ENCODE measurements at regions of chr1 and their contacts with region 1.

Region 1: GRCh38 chr1:45686317-45687013 is at the start of gene GPBP1L1:
- DNase-seq: peak; percentile 98
- H3K4me3 Mint-ChIP-seq: peak within 1 kb of the TSS; percentile 89
- H3K27ac Mint-ChIP-seq: peak within 1 kb of the TSS; percentile 80
- H3K4me1 Mint-ChIP-seq: peaks cover 7% of the 10 kb centered on the region
- H3K27me3 Mint-ChIP-seq: no peaks in the 10 kb centered on the region
- CTCF ChIP-seq: no peak
- total RNA-seq, gene GPBP1L1: 117 and 127 TPM in 2 replicates

Region 2: DNA sequence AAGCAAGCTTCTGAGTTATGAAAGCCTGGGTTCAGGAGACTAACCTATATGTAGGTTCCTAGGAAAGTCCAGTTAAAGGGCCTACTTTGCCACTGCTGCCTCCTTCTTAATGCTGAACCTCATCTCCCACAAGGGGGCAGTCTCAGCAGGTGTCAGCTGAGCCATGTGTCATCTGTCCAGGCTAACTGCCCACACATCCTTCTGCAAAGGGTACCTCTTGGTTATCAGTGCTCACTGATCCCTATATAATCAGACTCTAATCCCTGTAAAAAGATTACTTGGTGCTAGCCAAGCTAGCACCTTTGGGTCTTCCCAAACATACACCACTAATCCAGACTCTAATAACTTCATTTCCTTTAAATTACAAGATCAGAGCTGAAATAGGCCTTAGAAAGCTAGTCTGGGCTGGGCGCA is 173.8 kb before region 1 on chr1:
- CTCF ChIA-PET with region 1: no interaction called
- intact Hi-C with region 1: loop called (anchors 5 kb)
- DNase-seq: peak; percentile 79
- H3K4me3 Mint-ChIP-seq: no peak overlapping the region
- H3K27ac Mint-ChIP-seq: no peak overlapping the region
- H3K4me1 Mint-ChIP-seq: peaks cover 46% of the 10 kb centered on the region
- H3K27me3 Mint-ChIP-seq: no peaks in the 10 kb centered on the region
- CTCF ChIP-seq: peak; percentile 72

Region 3: GRCh38 chr1:45621501-45621836 is 65.0 kb before region 1 on chr1:
- CTCF ChIA-PET with region 1: no interaction called
- intact Hi-C with region 1: no loop called
- DNase-seq: no peak
- H3K4me3 Mint-ChIP-seq: no peak overlapping the region
- H3K27ac Mint-ChIP-seq: no peak overlapping the region
- H3K4me1 Mint-ChIP-seq: no peaks in the 10 kb centered on the region
- H3K27me3 Mint-ChIP-seq: no peaks in the 10 kb centered on the region
- CTCF ChIP-seq: no peak

Region 4: GRCh38 chr1:45643978-45644377 is 42.5 kb before region 1 on chr1:
- CTCF ChIA-PET with region 1: interaction called, 7 read pairs
- intact Hi-C with region 1: loop called (anchors 2 kb)
- DNase-seq: peak; percentile 26
- H3K4me3 Mint-ChIP-seq: no peak overlapping the region
- H3K27ac Mint-ChIP-seq: no peak overlapping the region
- H3K4me1 Mint-ChIP-seq: peaks cover 20% of the 10 kb centered on the region
- H3K27me3 Mint-ChIP-seq: no peaks in the 10 kb centered on the region
- CTCF ChIP-seq: no peak

Region 5: GRCh38 chr1:45704637-45705036 is 18.2 kb after region 1 on chr1:
- CTCF ChIA-PET with region 1: no interaction called
- intact Hi-C with region 1: no loop called
- DNase-seq: no peak
- H3K4me3 Mint-ChIP-seq: no peak overlapping the region
- H3K27ac Mint-ChIP-seq: no peak overlapping the region
- H3K4me1 Mint-ChIP-seq: no peaks in the 10 kb centered on the region
- H3K27me3 Mint-ChIP-seq: no peaks in the 10 kb centered on the region
- CTCF ChIP-seq: no peak

Region 6: GRCh38 chr1:45843474-45843905 is 157.0 kb after region 1 on chr1:
- CTCF ChIA-PET with region 1: interaction called, 10 read pairs
- intact Hi-C with region 1: no loop called
- DNase-seq: no peak
- H3K4me3 Mint-ChIP-seq: no peak overlapping the region
- H3K27ac Mint-ChIP-seq: no peak overlapping the region
- H3K4me1 Mint-ChIP-seq: no peaks in the 10 kb centered on the region
- H3K27me3 Mint-ChIP-seq: no peaks in the 10 kb centered on the region
- CTCF ChIP-seq: no peak

Region 7: DNA sequence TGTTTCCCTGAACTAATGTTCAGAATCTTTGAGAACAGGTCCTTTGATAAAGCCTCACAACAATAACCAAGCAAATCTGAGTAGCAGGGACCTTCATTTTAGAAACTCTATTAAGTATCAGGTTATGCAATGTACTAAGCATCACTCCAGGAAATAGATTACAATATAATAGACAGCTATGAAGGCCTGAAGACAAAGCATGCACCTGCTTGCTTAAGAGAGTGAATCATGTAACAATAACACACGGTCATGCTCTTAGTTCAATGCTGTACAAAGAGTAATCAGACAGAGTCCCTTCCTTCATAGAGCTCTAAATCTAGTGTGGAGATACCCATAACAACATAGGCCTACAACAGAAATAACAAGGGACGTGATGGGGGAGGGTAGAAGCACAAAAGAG is 1639.1 kb after region 1 on chr1:
- CTCF ChIA-PET with region 1: no interaction called
- intact Hi-C with region 1: loop called (anchors 10 kb)
- DNase-seq: peak; percentile 39
- H3K4me3 Mint-ChIP-seq: no peak overlapping the region
- H3K27ac Mint-ChIP-seq: peak overlapping the region; percentile 94
- H3K4me1 Mint-ChIP-seq: peaks cover 16% of the 10 kb centered on the region
- H3K27me3 Mint-ChIP-seq: no peaks in the 10 kb centered on the region
- CTCF ChIP-seq: no peak

Measured in Calu3 (cell line).